ENCODE measurements at regions of chr13 and their contacts with region 1.

Region 1: GRCh38 chr13:102596147-102597028 is at the start of gene TPP2:
- DNase-seq: peak; percentile 99
- H3K4me3 ChIP-seq: peak within 1 kb of the TSS; percentile 84 to 99 (median 98)
- H3K27ac ChIP-seq: peak within 1 kb of the TSS; percentile 93 to 98 (median 97)
- H3K4me1 ChIP-seq: peaks cover 30 to 54% (median 50%) of the 10 kb centered on the region in 4 donors
- H3K27me3 ChIP-seq: peaks cover 0 to 4% (median 0%) of the 10 kb centered on the region in 4 donors
- CTCF ChIP-seq: no peak
- EP300 ChIP-seq: no peak
- POLR2A ChIP-seq: peak; percentile 45
- total RNA-seq, gene TPP2: 30.3 to 38.4 (median 32.1) TPM

Region 2: DNA sequence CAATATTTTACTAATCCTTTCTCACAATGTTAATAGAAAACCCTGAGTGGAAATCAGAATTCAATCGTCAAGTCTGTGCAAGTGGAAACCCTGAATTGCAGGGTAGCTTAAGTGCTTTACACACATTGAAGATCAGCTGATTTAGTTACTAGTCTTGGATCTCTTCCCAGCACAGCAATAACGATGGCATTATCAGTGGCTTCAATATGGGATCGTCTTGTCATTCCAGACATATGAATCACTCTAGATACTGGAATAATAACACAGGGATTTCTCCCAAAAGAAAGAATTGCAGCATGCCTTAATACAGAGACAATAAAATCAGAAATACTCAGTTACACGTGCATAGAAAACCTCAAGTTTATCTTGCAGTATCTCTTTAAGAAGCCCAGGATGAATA is 111.1 kb after region 1 on chr13:
- intact Hi-C with region 1: no loop called
- DNase-seq: no peak
- H3K4me3 ChIP-seq: no peak overlapping the region
- H3K27ac ChIP-seq: no peak overlapping the region
- H3K4me1 ChIP-seq: peaks cover 2 to 10% (median 6%) of the 10 kb centered on the region in 4 donors
- H3K27me3 ChIP-seq: no peaks in the 10 kb centered on the region
- CTCF ChIP-seq: no peak
- EP300 ChIP-seq: no peak
- POLR2A ChIP-seq: no peak

Region 3: DNA sequence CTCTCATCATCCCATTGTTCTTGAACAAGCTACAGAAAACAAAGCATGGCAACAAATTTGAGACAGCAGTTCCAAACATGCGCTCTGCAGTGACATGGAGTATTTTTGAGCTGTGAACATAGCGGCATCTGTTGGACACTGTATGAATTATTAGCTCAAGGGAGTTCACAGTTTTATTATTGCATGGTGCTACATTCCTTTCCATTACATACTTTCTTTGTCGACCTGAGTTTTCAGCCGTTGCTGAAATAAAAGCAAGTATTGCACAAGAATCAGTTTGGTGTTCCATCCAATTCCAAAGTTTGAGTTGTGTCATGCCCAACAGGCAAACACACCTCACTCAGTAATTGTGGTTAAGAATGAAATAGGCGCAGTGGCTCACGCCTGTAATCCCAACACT is 128.5 kb after region 1 on chr13:
- intact Hi-C with region 1: loop called (anchors 5 kb)
- DNase-seq: no peak
- H3K4me3 ChIP-seq: no peak overlapping the region
- H3K27ac ChIP-seq: no peak overlapping the region
- H3K4me1 ChIP-seq: no peaks in the 10 kb centered on the region
- H3K27me3 ChIP-seq: no peaks in the 10 kb centered on the region
- CTCF ChIP-seq: peak in 1 of 3 experiments; percentile 24
- EP300 ChIP-seq: no peak
- POLR2A ChIP-seq: no peak

Measured in esophagus muscularis mucosa (tissue), 4 donors.